Left lung (tissue), 14 donors: ENCODE measurements at regions of chr20 and their contacts with region 1.

Region 1: DNA sequence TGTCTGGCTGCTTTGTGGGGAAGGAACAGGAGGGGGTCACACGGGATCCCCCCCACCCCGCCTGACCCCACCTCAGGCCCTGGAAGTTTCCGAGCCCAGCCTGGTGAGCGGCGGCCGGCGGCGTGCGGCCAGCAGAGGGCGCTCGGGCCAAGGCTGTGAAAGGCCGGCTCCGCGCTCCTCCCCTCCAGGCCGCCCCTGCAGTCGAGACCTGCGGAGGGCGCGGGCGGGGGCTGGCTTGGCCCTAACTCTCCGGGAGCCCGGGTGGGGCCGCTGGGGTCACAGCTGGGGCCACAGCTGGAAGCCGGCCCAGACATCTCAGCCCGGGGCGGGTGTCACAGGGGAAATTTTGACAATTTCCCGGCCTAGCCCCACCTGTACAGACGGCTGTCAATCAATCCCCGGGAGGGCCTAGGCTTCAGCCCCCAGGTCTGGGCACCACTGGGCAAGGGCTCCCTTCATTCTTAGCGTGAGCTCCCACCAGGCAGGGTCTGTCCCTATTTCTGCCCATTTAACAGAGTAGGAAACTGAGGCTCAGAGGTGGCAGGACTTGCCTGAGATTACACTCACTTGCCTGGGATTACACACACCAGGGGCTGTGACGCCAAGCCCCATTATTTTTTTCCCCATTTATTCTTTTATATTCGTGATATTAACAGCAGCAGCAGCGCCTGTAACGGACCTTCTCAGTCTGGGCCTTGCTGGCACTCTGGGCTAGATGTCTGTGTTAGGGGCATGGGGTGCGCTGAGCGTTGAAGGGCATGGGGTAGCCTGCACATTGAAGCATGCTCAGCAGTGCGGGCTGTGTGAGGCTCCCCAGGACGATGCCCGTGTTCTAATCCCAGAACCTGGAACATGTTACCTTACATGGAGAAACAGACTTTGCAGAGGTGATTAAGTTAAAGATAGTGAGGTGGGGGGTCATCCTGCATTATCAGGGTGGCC is 23.0 kb downstream of the ZBP1 start:
- DNase-seq: peak; percentile 56 to 94 (median 66)
- ATAC-seq: peak; percentile 93
- H3K4me3 ChIP-seq: no peak overlapping the region
- H3K27ac ChIP-seq: no peak overlapping the region
- H3K4me1 ChIP-seq: peaks cover 0 to 7% of the 10 kb centered on the region in 2 donors
- H3K27me3 ChIP-seq: peaks cover 0 to 4% of the 10 kb centered on the region in 2 donors
- CTCF ChIP-seq: peak; percentile 95 to 96

Region 2: GRCh38 chr20:57514273-57514751 is 83.0 kb before region 1 on chr20:
- intact Hi-C with region 1: loop called (anchors 2 to 10 kb)
- DNase-seq: peak in 3 of 4 donors; percentile 53 to 81 (median 56)
- ATAC-seq: peak; percentile 82
- H3K4me3 ChIP-seq: no peak overlapping the region
- H3K27ac ChIP-seq: no peak overlapping the region
- H3K4me1 ChIP-seq: peaks cover 0 to 7% of the 10 kb centered on the region in 2 donors
- H3K27me3 ChIP-seq: peaks cover 0 to 12% of the 10 kb centered on the region in 2 donors
- CTCF ChIP-seq: peak; percentile 59 to 79

Region 3: GRCh38 chr20:57654363-57654997 is 57.2 kb after region 1 on chr20:
- intact Hi-C with region 1: no loop called
- DNase-seq: peak in 3 of 4 donors; percentile 34 to 78 (median 56)
- ATAC-seq: peak; percentile 82
- H3K4me3 ChIP-seq: no peak overlapping the region
- H3K27ac ChIP-seq: no peak overlapping the region
- H3K4me1 ChIP-seq: no peaks in the 10 kb centered on the region
- H3K27me3 ChIP-seq: no peaks in the 10 kb centered on the region
- CTCF ChIP-seq: peak; percentile 88 to 96

Region 4: DNA sequence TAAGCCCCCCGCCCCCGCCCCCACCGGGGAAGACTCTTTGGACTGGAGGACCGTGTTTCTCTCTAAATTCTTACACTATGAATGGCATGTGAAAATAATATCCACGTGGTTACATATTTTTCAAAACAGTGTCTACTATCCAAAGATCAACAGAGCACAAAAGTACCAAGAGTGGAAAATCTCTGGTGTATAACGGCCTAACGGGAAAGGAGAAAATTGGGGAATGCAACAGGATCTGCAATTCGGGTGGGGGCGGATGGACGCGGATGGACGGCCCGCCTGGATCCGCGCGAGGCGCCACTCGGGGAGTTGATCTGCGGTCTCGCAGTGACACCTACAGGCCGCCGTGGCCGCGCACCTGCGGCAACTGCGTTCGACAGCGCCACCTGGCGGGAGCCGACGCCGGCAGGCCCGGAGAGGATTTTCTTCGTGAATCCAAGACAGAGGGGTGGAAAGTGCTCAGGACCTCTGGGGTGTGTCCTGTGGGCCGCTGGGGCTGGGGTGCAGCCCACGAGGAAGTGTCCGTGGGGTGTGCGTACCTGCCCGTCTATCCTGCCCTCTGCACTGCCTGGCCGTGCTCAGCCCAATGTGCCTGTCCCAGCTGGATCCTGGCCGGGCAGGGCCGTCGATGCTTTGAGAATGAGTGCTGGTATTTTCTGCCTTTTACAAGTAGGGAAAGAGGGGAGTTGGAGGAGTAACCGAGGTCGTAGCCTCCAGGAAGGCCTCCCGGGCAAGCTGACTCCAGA is 612.6 kb after region 1 on chr20:
- intact Hi-C with region 1: loop called (anchors 5 to 10 kb)
- DNase-seq: peak; percentile 73 to 98 (median 84)
- ATAC-seq: peak; percentile 97
- H3K4me3 ChIP-seq: no peak overlapping the region
- H3K27ac ChIP-seq: no peak overlapping the region
- H3K4me1 ChIP-seq: no peaks in the 10 kb centered on the region
- H3K27me3 ChIP-seq: peaks cover 0 to 18% of the 10 kb centered on the region in 2 donors
- CTCF ChIP-seq: peak; percentile 99 to 100